ENCODE measurements at regions of chr1 and their contacts with region 1.

Region 1: DNA sequence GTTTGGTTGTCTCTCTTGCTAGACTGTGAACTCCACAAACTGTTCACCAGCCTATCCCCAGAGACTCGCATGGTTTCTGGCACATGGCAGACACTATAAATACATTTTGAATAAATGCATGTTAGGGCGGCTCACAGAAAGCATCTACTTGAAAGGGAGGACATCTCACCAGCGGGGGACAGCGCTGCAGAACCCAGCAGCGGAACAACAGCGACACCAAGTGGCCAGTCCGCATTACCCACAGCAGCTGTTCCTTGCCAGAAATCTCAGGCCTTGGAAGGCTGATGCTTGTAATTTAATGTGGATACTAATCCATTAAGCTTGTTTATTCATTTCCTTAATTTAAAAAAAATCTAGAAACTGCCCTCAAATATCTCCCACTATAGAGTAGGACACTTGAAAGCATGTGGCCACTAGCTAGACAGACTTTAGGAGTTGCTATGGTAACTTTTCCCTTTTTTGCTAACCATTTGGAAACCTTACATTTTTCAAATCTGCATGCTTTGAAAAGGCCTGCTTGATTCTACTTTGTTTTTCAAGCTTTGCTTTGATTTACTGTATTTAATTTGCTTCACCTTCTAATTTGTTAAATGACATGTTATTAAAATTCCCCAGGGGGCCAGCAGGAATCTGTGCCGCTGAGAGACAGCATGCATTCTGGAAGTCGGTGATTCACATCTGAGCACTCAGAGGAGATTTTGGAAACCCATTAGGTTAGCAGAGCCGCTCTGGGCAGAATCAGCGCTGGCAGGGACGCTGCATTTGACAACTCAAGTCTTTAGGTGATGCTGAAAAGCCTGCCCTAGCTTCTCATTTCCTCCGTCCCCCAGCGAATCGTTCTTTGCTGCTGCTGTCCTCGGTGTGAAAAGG is 63.5 kb upstream of the SSX2IP start:
- DNase-seq: peak; percentile 78
- ATAC-seq: peak; percentile 89
- H3K4me3 Mint-ChIP-seq: no peak overlapping the region
- H3K27ac Mint-ChIP-seq: no peak overlapping the region
- H3K4me1 Mint-ChIP-seq: peaks cover 59% of the 10 kb centered on the region
- H3K27me3 Mint-ChIP-seq: no peaks in the 10 kb centered on the region
- CTCF ChIP-seq: peak; percentile 84

Region 2: DNA sequence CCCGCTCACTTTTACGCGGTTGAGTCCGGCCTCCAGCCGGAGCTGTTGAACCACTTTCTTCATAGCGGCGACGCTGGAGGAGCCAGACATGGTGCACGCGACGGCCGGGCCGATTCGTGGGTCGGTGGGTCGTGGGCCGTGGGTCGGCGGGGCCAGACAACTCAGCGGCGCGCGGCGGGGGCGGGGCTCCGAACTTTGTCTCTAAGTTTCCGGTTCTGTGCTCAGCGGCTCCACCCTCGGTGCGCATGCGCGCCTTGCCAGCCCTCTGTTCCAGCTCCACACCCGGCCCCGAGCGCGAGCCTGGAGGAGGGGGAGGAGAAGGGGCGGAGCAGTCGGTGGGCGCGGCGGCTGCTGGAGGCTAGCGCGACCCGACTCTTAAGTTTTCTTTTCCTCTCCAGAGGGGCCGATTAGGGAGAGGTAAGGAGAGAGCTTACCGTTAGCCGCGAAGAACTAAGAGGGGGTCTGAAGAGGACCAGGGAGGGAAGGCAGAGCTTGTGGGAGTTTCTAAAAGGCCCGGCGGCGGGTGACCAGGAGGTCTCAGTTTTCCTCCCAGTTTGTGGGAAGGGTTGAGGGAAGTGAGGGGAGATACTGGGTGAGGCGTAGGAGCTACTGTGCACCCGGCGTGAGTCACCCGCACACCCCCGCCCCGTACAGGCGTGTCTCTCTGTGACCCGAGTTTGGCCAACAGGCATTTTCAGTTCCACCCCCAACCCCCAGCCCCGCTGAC is 247.6 kb before region 1 on chr1 and contains the starts of genes GNG5 and SPATA1:
- CTCF ChIA-PET with region 1: interaction called, 10 read pairs
- POLR2A ChIA-PET with region 1: no interaction called
- DNase-seq: peak; percentile 98
- ATAC-seq: peak; percentile 93
- H3K4me3 Mint-ChIP-seq: peak within 1 kb of the TSS; percentile 100
- H3K27ac Mint-ChIP-seq: peak within 1 kb of the TSS; percentile 99
- H3K4me1 Mint-ChIP-seq: peaks cover 36% of the 10 kb centered on the region
- H3K27me3 Mint-ChIP-seq: no peaks in the 10 kb centered on the region; the same call in 1 of the 2 replicates
- CTCF ChIP-seq: no peak
- total RNA-seq, gene GNG5: 108 to 122 TPM (median 111 TPM) in 3 replicates
- total RNA-seq, gene SPATA1: 0.85 to 0.92 TPM in 2 of 3 replicates, not detected in the other

Region 3: GRCh38 chr1:84620720-84621313 is 132.9 kb before region 1 on chr1:
- CTCF ChIA-PET with region 1: interaction called, 15 read pairs
- POLR2A ChIA-PET with region 1: no interaction called
- DNase-seq: peak; percentile 87
- ATAC-seq: peak; percentile 91
- H3K4me3 Mint-ChIP-seq: peak overlapping the region; percentile 79
- H3K27ac Mint-ChIP-seq: no peak overlapping the region
- H3K4me1 Mint-ChIP-seq: peaks cover 21% of the 10 kb centered on the region
- H3K27me3 Mint-ChIP-seq: peaks cover 2% of the 10 kb centered on the region
- CTCF ChIP-seq: peak; percentile 99

Region 4: DNA sequence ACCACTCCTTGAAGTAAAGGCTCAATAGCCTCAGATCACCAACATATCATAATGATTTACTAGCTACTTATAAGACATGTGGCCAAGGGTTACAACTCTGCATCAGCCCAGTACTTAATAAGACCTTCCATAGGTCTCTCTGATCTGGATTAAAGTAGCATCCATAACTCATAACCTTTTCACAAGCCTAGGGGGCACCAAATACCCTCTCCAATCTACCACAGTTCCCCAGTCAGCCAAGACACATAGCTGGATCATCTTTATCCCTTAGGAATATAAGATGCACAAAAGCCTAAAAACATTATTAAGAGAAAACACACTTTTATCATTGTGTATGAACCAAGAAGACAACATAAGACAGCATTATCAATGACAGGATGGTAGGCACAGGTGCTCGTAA is 85.6 kb before region 1 on chr1:
- CTCF ChIA-PET with region 1: interaction called, 11 read pairs
- POLR2A ChIA-PET with region 1: no interaction called
- DNase-seq: no peak
- ATAC-seq: peak; percentile 89
- H3K4me3 Mint-ChIP-seq: no peak overlapping the region
- H3K27ac Mint-ChIP-seq: no peak overlapping the region
- H3K4me1 Mint-ChIP-seq: peaks cover 14% of the 10 kb centered on the region
- H3K27me3 Mint-ChIP-seq: no peaks in the 10 kb centered on the region
- CTCF ChIP-seq: no peak

Region 5: GRCh38 chr1:84712276-84712874 is 41.4 kb before region 1 on chr1:
- CTCF ChIA-PET with region 1: no interaction called
- POLR2A ChIA-PET with region 1: no interaction called
- DNase-seq: no peak
- ATAC-seq: no peak
- H3K4me3 Mint-ChIP-seq: no peak overlapping the region
- H3K27ac Mint-ChIP-seq: no peak overlapping the region
- H3K4me1 Mint-ChIP-seq: peaks cover 8% of the 10 kb centered on the region
- H3K27me3 Mint-ChIP-seq: no peaks in the 10 kb centered on the region; the same call in 1 of the 2 replicates
- CTCF ChIP-seq: no peak

Measured in WTC11 (cell line).